ENCODE measurements at regions of chr2 and their contacts with region 1.

Region 1: DNA sequence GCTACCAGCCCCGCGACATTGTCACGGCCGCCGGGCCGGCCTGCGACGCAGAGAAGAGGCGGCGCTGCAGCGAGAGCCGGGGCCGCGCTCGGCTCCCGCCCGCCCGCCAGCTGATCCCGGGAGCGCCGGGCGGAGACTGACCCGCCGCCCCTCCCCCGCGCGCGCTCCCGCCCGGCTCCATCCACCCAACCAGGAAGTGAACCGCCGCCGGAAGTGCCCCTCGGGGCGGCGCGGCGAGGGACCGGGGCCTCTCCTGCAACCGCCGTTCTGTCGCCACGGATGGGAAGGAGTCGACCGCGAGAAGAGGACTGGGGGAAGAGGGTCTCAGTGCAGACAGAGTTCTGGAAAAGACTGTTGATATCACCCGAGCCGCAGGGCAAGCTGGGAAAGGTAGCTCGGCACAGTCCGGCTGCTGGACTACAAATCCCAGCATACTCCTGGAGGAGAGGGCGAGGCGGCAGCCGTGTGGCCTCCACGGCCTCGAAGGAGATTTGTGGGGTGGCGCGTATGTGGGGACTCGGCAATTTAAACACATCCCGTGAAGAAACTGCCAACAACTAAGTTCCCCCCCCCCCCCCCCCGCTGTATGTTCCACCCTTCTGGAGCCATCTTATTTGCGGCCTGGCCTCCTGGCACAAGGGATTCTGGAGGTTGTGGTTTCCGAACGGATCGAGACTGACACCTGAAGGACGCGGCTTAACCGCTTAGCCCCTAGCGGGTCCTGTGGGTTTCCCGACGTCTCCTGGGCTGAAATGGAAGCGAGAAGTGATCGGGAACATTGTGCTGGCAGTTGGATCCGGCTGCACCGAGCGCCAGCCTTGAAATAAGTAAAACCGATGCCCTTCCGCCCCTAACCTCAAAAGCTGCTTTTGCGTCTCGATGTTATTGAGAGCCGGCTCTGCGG is at the start of gene AAK1:
- DNase-seq: peak; percentile 95
- H3K4me3 Mint-ChIP-seq: peak within 1 kb of the TSS; percentile 86
- H3K27ac Mint-ChIP-seq: peak within 1 kb of the TSS; percentile 99
- H3K4me1 Mint-ChIP-seq: peaks cover 64% of the 10 kb centered on the region
- H3K27me3 Mint-ChIP-seq: no peaks in the 10 kb centered on the region
- total RNA-seq, gene AAK1: 81.7 and 86.0 TPM in 2 replicates

Region 2: DNA sequence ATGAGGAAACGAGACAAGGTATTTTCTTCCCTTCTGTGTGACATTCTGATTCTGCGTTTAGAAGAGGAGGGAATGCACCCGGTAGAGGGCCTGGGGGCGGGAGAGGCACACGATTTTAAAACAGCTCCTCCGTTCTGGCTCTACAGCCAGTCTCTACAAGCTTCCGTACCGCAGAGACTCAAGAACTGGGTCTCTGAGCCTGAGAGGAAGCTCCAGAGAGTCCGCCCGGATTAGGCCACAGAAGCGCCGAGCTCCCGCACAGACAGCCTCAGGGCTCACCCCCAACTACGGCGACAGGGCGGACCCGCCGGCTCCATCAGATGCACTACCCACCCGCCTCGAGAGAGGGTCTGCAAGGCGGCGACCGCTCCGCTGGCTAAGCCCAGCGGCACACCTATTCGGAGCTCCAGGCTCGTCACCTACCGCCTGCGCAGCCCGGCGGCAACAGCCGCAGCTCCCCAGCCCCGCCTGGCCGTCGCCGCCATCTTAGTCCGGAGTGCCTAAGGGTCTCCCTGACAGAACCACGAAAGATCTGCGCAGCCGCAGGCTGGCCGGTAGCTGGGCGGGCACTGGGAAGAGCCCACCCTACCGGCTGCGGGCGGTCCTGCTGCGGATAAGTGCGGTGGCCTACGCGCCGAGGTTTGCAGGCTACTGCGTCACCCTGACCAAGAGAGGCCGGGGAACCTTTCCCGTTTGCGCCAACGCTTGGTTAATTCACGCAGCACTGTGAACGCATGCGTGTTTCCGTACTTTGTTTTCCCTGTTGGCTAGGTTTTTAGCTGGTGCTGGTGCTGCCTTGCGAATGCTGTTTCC is 206.7 kb before region 1 on chr2 and contains the start of gene NFU1:
- intact Hi-C with region 1: loop called (anchors 2 kb)
- DNase-seq: peak; percentile 95
- H3K4me3 Mint-ChIP-seq: peak within 1 kb of the TSS; percentile 95
- H3K27ac Mint-ChIP-seq: peak within 1 kb of the TSS; percentile 98
- H3K4me1 Mint-ChIP-seq: peaks cover 17% of the 10 kb centered on the region
- H3K27me3 Mint-ChIP-seq: no peaks in the 10 kb centered on the region
- total RNA-seq, gene NFU1: 30.4 and 32.3 TPM in 2 replicates

Region 3: GRCh38 chr2:69625078-69625795 is 18.6 kb before region 1 on chr2:
- intact Hi-C with region 1: loop called (anchors 1 kb)
- DNase-seq: no peak
- H3K4me3 Mint-ChIP-seq: no peak overlapping the region
- H3K27ac Mint-ChIP-seq: no peak overlapping the region
- H3K4me1 Mint-ChIP-seq: peaks cover 10% of the 10 kb centered on the region
- H3K27me3 Mint-ChIP-seq: no peaks in the 10 kb centered on the region

Region 4: DNA sequence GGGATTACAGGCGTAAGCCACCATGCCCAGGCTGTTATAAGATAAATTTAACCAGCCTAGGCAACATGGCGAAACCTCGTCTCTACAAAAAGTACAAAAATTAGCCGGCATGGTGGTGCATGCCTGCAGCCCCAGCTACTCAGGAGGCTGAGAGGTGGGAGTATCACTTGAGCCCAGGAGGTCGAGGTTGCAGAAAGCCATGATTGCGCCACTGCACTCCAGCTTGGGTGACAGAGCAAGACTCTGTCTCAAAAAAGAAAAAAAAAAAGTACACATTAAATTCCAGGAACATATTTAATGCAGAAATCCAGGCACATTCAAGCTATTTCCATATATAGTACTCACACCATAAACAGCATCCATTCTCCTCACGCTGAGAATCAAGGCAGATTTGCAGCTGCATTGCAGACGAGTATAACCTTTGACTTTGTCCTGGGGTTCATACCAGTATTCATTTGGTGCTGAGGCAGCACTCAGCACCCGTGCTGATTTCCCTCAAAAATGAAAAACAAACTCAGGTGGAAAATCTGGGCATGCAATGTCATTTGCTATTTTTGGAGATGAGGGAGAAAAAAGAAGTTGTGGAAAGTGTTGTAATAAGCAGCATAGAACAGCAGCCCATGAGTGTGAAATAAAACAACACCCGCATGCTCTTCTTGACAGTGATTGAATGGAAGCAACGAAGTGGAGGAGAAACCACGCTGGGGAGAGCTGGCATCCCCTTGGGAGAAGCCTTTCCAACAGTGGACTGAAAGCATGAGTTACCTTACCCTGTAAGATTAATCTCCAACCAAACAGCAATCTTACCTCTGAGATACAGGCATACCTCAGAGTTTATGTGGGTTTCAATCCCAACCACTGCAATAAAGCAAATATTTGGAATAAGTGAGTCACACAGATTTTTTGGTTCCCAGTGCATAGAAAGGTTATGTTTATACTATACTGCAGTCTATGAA is 51.3 kb after region 1 on chr2:
- intact Hi-C with region 1: loop called (anchors 1 kb)
- DNase-seq: no peak
- H3K4me3 Mint-ChIP-seq: no peak overlapping the region
- H3K27ac Mint-ChIP-seq: peak overlapping the region; percentile 78
- H3K4me1 Mint-ChIP-seq: peaks cover 51% of the 10 kb centered on the region
- H3K27me3 Mint-ChIP-seq: no peaks in the 10 kb centered on the region

Region 5: DNA sequence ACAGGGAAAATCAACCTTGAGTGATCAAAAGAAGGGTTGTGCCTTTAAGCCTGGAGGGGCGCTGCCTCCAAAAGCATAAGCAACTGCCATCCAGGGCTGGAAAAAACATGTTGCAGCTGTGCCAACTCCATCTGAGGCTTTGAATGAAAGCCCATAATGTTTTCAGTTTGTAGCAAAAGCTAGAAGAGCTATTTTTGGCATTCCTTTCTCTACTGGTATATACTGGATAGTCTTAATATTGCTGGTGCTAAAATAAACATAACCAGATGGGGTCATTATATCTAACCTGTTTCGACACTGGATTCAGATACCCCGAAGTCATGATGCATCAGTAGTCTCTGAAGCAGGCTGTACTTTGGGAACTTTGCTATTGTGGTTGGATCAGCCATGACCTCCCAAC is 123.2 kb after region 1 on chr2:
- intact Hi-C with region 1: no loop called
- DNase-seq: no peak
- H3K4me3 Mint-ChIP-seq: no peak overlapping the region
- H3K27ac Mint-ChIP-seq: no peak overlapping the region
- H3K4me1 Mint-ChIP-seq: peaks cover 64% of the 10 kb centered on the region
- H3K27me3 Mint-ChIP-seq: no peaks in the 10 kb centered on the region

Region 6: GRCh38 chr2:69829256-69830046 is 185.6 kb after region 1 on chr2 and contains the start of gene GMCL1:
- intact Hi-C with region 1: loop called (anchors 1 kb)
- DNase-seq: peak; percentile 100
- H3K4me3 Mint-ChIP-seq: peak within 1 kb of the TSS; percentile 95
- H3K27ac Mint-ChIP-seq: peak within 1 kb of the TSS; percentile 97
- H3K4me1 Mint-ChIP-seq: peaks cover 43% of the 10 kb centered on the region
- H3K27me3 Mint-ChIP-seq: no peaks in the 10 kb centered on the region
- total RNA-seq, gene GMCL1: 25.9 and 28.0 TPM in 2 replicates

Region 7: DNA sequence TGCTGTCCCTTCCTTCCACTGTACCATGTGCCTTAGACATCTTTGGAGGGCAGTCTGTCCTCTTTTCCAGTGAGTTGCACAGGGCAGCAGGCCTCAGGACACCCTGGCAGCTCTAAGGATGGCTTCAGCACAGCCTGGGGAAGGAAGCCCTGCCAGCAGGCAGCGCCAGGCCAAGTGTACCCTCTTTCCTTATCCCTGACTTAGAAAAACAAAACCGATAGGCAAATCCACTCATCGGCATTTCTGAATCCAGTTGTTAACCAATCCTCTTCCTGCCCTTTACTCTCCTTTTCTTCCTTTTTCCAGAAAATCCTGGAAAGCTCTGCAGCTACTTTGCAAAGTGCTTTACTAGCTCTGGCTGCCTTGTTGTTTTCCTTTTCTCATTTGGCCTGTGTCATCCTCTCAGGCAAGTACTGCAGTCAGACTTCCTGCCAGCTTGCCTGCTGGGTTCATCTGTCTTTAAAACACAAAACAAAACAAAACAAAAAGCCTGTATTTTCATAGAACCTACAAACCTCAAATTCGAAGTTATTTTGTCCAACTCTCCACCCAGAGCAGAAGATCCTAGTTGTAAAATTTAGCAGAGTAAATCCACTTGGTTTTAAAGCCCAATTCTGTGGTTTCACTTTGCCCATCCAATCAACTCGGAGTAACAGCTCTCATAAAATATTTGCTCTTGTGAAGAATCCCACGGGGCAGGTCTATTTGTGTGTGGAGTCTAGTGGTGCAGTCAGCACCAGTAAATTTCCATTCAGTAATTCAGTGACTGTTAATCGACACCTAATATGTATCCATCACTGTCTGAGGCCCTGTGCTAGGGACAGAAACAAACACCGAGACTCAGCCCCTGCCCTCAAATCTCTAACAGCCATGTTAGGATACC is 488.6 kb after region 1 on chr2:
- intact Hi-C with region 1: loop called (anchors 5 kb)
- DNase-seq: peak; percentile 84
- H3K4me3 Mint-ChIP-seq: peak overlapping the region; percentile 91
- H3K27ac Mint-ChIP-seq: peak overlapping the region; percentile 99
- H3K4me1 Mint-ChIP-seq: peaks cover 72% of the 10 kb centered on the region
- H3K27me3 Mint-ChIP-seq: no peaks in the 10 kb centered on the region